K562 (cell line): ENCODE measurements at regions of chr5 and their contacts with region 1.

Region 1: DNA sequence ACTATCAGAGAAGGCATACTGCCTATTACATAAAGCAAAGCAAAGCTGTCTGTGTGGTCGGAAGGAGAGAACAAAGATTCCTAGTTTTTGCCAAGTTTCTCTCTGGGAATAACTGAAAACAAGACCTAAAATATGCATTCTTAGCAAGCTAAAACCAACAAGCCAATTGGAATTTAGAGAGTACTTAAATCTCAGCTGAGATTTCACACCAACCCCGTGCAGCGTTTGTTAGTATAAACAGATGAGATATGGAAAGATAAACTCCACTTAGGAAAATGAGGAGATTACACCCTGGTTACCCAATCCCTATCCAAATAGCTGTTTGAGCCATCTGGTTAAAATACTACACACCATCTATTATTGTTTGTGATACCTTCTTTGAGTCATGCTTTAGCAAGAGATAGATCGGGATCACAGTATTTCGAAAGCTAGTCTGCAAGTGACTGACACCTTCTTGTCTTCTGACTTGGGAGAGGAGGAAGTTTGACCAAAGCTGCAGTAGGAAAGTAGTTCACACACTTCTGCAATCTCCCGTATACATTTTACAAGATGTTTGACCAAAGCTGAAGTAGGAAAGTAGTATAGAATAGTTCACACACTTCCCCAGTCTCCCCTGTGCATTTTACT is 18.2 kb downstream of the FAF2 start:
- DNase-seq: no peak
- ATAC-seq: no peak; the same call in 2 of the 3 replicates
- H3K4me3 ChIP-seq: no peak overlapping the region
- H3K27ac ChIP-seq: no peak overlapping the region
- H3K4me1 ChIP-seq: no peaks in the 10 kb centered on the region
- H3K27me3 ChIP-seq: no peaks in the 10 kb centered on the region
- CTCF ChIP-seq: no peak
- EP300 ChIP-seq: no peak
- POLR2A ChIP-seq: no peak
- RAD21 ChIP-seq: no peak

Region 2: GRCh38 chr5:176447982-176448608 is 18.3 kb before region 1 on chr5 and contains the start of gene FAF2:
- CTCF ChIA-PET with region 1: no interaction called
- POLR2A ChIA-PET with region 1: interaction called, 22 read pairs
- in situ Hi-C with region 1: no loop called
- intact Hi-C with region 1: no loop called
- DNase-seq: peak; percentile 98 to 99 (median 98)
- ATAC-seq: peak; percentile 97
- H3K4me3 ChIP-seq: peak within 1 kb of the TSS; percentile 88
- H3K27ac ChIP-seq: peak within 1 kb of the TSS; percentile 98
- H3K4me1 ChIP-seq: peaks cover 6 to 21% of the 10 kb centered on the region in 2 experiments; a peak in 4 of 5 replicates
- H3K27me3 ChIP-seq: no peaks in the 10 kb centered on the region
- CTCF ChIP-seq: peak; percentile 83 to 98 (median 96)
- EP300 ChIP-seq: peak; percentile 51; the same call in 1 of the 2 replicates
- POLR2A ChIP-seq: peak; percentile 92
- RAD21 ChIP-seq: no peak
- polyA plus RNA-seq, gene FAF2: 25.2 to 32.8 TPM

Region 3: GRCh38 chr5:176547802-176548201 is 81.4 kb after region 1 on chr5:
- CTCF ChIA-PET with region 1: no interaction called
- POLR2A ChIA-PET with region 1: no interaction called
- in situ Hi-C with region 1: no loop called
- intact Hi-C with region 1: no loop called
- DNase-seq: no peak
- ATAC-seq: no peak
- H3K4me3 ChIP-seq: no peak overlapping the region
- H3K27ac ChIP-seq: no peak overlapping the region
- H3K4me1 ChIP-seq: peaks cover 0 to 45% of the 10 kb centered on the region in 2 experiments; a peak in 4 of 5 replicates
- H3K27me3 ChIP-seq: peaks cover 18 to 34% of the 10 kb centered on the region in 2 experiments
- CTCF ChIP-seq: no peak
- EP300 ChIP-seq: no peak
- POLR2A ChIP-seq: no peak
- RAD21 ChIP-seq: no peak